ENCODE measurements at regions of chr1 and their contacts with region 1.

Region 1: GRCh38 chr1:1943834-1944570 is 24.9 kb upstream of the TMEM52 start:
- DNase-seq: peak; percentile 87

Region 2: DNA sequence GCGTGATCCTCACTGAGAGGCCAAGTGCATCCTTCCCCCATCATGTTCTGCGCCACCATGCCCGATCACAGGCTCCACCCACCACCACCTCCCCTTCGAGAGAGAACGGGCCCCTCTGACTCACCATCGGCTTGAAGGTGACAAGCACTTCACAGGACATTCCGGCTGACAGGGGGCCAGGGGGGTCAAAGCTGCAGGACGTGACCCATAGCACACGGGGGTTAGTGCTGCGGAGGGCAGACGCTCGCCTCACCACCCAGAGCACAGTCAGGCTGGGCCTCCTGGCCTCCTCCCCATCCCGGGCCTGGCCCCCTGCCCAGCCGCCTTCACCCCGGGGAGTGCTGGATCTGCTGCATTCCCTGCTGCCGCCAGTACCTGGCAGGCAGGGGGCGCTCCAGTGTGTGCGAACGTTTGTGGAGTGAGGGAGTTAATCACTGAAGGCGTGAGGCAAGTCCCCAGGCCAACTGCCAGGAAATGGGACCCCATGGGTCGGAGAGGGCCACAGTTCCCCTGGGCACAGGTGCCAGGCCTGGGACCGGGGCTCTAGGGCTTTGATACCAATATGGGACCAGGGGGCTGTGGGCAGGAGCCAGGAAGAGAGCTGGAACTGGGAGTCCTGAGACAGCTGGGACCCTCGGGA is 16.0 kb after region 1 on chr1:
- intact Hi-C with region 1: no loop called
- DNase-seq: peak; percentile 91

Region 3: GRCh38 chr1:2044510-2045319 is 100.7 kb after region 1 on chr1:
- intact Hi-C with region 1: loop called (anchors 5 kb)
- DNase-seq: peak; percentile 90

Region 4: GRCh38 chr1:2539312-2539907 is 595.4 kb after region 1 on chr1:
- intact Hi-C with region 1: no loop called
- DNase-seq: no peak

Region 5: DNA sequence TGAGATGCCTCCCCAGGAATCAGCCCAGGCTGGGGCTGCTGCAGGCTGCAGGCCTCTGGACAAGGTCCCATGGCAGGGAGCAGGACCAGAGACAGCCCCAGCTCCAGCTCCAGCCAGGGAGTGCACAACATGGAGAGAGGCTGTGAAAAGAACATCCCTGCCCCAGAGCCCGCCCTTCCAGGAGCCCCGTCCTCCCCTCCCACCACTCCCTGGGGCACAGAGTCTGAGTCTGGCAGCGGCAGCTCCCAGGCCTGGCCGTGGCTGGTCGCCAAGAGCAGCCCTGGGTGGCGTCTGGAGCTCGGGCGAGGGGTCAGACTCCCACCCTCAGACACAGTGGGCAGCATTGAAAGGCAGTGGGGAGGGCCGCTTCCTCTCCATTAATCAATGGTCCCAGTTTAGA is 1629.5 kb after region 1 on chr1:
- intact Hi-C with region 1: loop called in 1 of 2 experiments (anchors 5 kb)
- DNase-seq: no peak